Posterior vena cava (tissue), 2 donors: ENCODE measurements at regions of chr5 and their contacts with region 1.

Region 1: DNA sequence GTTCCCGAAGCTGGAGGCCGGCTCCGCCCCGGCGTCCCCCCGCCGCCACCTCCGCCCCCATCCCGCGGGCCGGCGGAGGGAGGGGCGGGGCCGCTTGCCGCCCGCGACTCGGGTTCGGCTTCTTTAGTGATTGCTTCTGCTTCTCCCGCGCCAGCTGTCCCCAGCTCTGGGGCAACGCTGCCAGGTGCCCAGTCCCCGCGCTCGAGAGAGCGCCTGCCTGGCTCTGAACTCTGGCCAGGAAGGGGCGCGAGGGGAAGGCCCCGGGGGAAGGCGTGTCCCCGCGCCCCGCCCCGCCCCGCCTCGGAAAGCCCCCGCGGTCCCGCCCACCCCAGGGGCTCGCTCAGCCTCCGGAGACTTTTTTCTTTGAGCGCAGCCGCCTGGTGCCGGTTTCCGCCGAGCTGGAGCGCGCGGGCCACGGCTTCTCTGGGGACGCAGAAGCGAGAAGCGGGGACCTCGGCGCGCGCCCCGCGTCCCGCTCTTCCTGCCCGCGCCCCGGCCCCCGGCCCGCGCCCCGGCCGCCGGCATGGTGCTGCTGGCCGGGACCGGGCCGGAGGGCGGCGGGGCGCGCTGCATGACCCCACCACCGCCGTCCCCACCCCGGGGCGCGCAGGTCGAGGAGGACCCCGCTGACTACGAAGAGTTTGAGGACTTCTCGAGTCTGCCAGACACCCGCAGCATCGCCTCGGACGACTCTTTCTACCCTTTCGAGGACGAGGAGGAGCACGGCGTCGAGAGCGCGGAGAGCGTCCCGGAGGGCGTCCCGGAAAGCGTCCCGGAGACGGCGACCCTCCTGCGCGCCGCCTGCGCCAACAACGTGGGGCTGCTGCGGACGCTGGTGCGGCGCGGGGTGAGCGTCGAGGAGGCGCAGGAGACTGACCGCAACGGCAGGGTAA is at the start of gene ANKRD33B:
- DNase-seq: peak; percentile 85
- total RNA-seq, gene ANKRD33B: 3.3 to 3.9 TPM

Region 2: GRCh38 chr5:8710426-8710930 is 1853.7 kb before region 1 on chr5:
- intact Hi-C with region 1: no loop called
- DNase-seq: no peak

Region 3: DNA sequence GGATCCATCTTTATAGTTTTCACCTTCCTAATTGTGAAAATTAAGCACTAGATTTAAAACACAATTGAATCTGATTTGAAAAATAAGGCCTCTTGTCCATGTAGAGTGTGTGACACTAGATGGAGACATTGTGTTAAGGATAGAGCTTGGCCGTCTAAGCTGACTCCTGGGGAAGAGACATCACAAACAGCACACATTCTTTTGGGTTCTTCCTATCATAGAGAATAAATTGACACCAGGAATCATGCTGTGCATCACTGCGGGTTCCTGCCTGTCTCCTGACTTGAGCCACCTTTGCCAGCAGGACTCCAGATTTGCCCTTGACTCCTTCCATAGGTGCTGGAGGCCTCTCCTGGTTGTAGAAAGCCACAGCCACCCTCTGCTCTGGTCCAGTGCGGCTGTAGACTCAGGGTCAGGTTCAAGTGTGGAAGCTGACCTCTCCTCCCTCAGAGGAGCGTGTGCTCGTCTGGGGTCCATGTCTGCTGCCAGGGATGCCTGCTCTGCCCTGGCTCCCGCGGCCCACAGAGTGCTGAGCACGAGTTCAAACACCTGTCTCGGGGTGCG is 111.3 kb before region 1 on chr5:
- intact Hi-C with region 1: loop called in 1 of 2 experiments (anchors 10 kb)
- DNase-seq: no peak

Region 4: DNA sequence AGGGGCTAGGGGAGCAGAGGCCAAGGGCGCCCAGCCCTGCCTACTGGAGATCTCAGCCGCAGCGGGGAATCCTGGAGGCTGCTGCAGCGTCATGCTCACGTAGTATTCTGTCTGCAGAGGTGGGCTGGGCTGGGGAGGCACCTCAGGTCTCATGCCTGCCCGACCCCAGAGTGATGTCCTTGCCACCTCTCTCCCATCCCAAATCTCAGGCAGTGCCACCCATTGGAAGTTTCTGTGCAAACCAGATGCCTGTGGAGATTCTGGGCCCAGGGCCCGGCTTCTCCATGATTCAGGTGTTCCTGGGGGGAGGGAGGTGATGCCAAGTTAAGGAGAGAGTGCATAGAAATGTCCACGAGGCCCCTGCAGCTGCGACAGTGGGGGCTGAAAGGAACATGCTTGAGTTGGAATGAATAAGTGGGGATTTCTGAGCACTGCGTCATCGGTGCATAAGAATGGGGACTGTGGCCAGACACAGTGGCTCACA is 71.7 kb after region 1 on chr5:
- intact Hi-C with region 1: loop called in 1 of 2 experiments (anchors 2 kb)
- DNase-seq: peak; percentile 63